HepG2 (cell line): ENCODE measurements at regions of chr14 and their contacts with region 1.

Region 1: GRCh38 chr14:65229751-65230749 is 127.7 kb upstream of the MAX start:
- DNase-seq: peak; percentile 96
- ATAC-seq: peak; percentile 44
- H3K4me3 ChIP-seq: peak overlapping the region; percentile 64 to 73 (median 67)
- H3K27ac ChIP-seq: peak overlapping the region; percentile 90
- H3K4me1 ChIP-seq: peaks cover 72% of the 10 kb centered on the region
- H3K27me3 ChIP-seq: no peaks in the 10 kb centered on the region
- CTCF ChIP-seq: no peak
- EP300 ChIP-seq: peak in 1 of 2 experiments; percentile 69; a peak in 2 of 4 replicates
- POLR2A ChIP-seq: peak; percentile 66 to 75
- RAD21 ChIP-seq: no peak

Region 2: DNA sequence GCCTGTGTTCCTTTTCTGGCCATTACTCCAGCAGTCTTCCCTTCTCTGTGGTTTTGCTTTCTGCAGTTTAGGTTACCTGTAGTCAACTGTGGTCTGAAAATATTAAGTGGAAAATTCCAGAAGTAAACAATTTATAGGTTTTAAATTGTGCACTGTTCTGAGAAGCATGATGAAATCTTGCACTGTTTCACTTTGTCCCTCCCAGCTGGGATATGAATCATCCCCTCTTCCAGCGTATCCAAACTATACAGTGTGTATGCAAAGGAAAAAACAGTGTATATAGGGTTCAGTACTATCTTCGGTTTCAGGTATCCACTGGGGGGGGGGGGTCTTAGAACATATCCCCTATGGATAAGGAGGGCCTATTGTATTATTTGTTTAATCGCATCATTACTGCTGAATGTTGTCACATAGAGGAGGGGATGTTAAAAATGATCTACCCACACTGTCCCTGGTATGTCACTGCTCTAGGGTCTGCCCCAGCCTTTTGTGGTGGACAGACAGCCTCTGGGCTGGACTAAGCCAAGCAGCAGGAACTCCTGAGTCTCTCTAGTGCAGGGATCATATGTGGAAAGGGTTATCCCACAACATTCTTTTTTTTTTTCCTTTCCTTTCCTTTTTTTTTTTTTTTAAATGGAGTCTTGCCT is 18.6 kb before region 1 on chr14:
- CTCF ChIA-PET with region 1: no interaction called
- POLR2A ChIA-PET with region 1: interaction called, 4 read pairs
- in situ Hi-C with region 1: no loop called
- intact Hi-C with region 1: loop called (anchors 2 kb)
- DNase-seq: peak; percentile 37
- ATAC-seq: peak; percentile 49; the same call in 1 of the 3 replicates
- H3K4me3 ChIP-seq: no peak overlapping the region
- H3K27ac ChIP-seq: no peak overlapping the region
- H3K4me1 ChIP-seq: peaks cover 29% of the 10 kb centered on the region
- H3K27me3 ChIP-seq: no peaks in the 10 kb centered on the region; a peak in 1 of 5 replicates
- CTCF ChIP-seq: no peak
- EP300 ChIP-seq: peak in 1 of 2 experiments; percentile 39; a peak in 1 of 4 replicates
- POLR2A ChIP-seq: no peak
- RAD21 ChIP-seq: no peak

Region 3: GRCh38 chr14:65255536-65256461 is 25.7 kb after region 1 on chr14:
- CTCF ChIA-PET with region 1: no interaction called
- POLR2A ChIA-PET with region 1: interaction called, 43 read pairs
- in situ Hi-C with region 1: no loop called
- intact Hi-C with region 1: no loop called
- DNase-seq: peak; percentile 69
- ATAC-seq: peak; percentile 82
- H3K4me3 ChIP-seq: peak overlapping the region; percentile 13 to 58 (median 20); a peak in 5 of 6 replicates
- H3K27ac ChIP-seq: peak overlapping the region; percentile 57
- H3K4me1 ChIP-seq: peaks cover 59% of the 10 kb centered on the region
- H3K27me3 ChIP-seq: no peaks in the 10 kb centered on the region
- CTCF ChIP-seq: peak; percentile 67
- EP300 ChIP-seq: 0 out of 4 replicates have a peak, but pooled peaks of 1 of the 2 experiments have one; percentile 2
- POLR2A ChIP-seq: no peak
- RAD21 ChIP-seq: no peak

Region 4: GRCh38 chr14:65872536-65872935 is 642.5 kb after region 1 on chr14:
- CTCF ChIA-PET with region 1: no interaction called
- POLR2A ChIA-PET with region 1: no interaction called
- in situ Hi-C with region 1: no loop called
- intact Hi-C with region 1: no loop called
- DNase-seq: no peak
- ATAC-seq: no peak
- H3K4me3 ChIP-seq: no peak overlapping the region
- H3K27ac ChIP-seq: no peak overlapping the region
- H3K4me1 ChIP-seq: no peaks in the 10 kb centered on the region
- H3K27me3 ChIP-seq: peaks cover 0 to 9% of the 10 kb centered on the region in 2 experiments; a peak in 2 of 5 replicates
- CTCF ChIP-seq: no peak
- EP300 ChIP-seq: no peak
- POLR2A ChIP-seq: no peak
- RAD21 ChIP-seq: no peak